Activated T-helper 1 cell treated with anti-CD3 and anti-CD28 coated beads, Interleukin-12 subunit alpha, Interleukin-12 subunit beta, Interleukin-2, Interleukin-4 antibody, amounts not matched to agents 30 ng/mL and 10 ng/mL and 1 ng/mL, durations not matched to agents 14 hours and 24 hours and 36 hours (primary cell): ENCODE measurements at regions of chr10 and their contacts with region 1.

Region 1: DNA sequence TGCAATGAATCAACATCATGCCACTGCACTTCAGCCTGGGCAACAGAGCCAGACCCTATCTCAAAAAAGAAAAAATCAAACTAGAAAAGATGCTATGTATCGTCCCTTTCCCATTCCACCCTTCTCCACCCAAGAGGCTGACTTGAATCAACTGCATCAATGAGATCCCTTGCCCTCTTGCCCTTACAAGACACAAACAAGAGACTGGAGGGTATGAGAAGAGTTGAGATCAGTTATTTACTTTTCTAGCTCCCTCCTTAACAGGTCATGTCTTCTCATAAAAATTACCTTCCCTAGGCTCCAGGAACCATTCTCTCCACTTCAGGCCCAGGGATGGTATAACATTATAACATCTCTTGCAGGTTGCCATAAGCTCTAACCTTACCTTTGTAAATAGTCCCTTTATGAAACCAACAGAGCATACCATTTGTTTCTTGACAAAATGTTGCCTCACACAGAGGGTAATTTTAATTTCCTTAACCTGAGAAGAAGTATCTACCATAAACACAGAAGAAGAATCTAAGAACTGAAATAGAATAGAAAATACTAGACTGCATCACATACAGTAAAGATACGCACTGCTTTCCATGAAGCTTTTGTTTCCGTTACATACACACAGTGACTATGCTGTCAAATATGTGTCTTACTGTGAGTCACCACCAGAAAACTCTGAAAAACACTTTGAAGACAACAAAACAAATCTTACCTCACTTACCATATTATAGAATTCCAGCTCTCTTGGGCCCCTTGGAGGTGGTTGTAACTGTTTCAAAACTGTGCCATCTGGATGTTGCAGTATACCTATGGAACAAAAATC is 30.5 kb downstream of the IPMK start:
- DNase-seq: no peak
- H3K4me3 Mint-ChIP-seq: no peak overlapping the region
- H3K27ac Mint-ChIP-seq: peak overlapping the region; percentile 93
- H3K4me1 Mint-ChIP-seq: peaks cover 43% of the 10 kb centered on the region
- H3K27me3 Mint-ChIP-seq: peaks cover 2% of the 10 kb centered on the region

Region 2: DNA sequence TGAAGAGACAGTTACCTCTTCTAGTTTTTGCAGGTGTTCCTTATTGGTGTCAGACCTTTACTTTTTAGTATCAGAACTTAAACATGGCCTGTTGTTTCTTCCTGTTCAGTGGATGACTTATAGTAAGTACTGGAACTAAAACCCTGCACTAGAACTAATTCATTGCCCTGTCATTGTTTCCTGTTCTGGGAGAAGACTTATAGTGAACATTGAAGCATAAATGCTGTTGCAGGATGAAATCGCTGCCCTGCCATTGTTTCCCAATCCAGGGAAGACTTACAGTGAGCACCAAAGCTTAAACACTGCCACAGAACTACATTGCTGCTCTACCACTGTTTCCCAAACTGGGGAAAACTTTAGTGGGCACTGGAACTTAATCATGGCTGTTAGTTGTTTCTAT is 17.4 kb after region 1 on chr10:
- intact Hi-C with region 1: loop called (anchors 2 kb)
- DNase-seq: no peak
- H3K4me3 Mint-ChIP-seq: no peak overlapping the region
- H3K27ac Mint-ChIP-seq: no peak overlapping the region
- H3K4me1 Mint-ChIP-seq: peaks cover 21% of the 10 kb centered on the region
- H3K27me3 Mint-ChIP-seq: no peaks in the 10 kb centered on the region